ENCODE measurements at regions of chr9 and their contacts with region 1.

Region 1: GRCh38 chr9:114830546-114830945 is 24.7 kb upstream of the TNFSF15 start:
- DNase-seq: no peak
- ATAC-seq: no peak
- H3K4me3 ChIP-seq: no peak overlapping the region
- H3K27ac ChIP-seq: no peak overlapping the region
- H3K4me1 ChIP-seq: no peaks in the 10 kb centered on the region
- H3K27me3 ChIP-seq: no peaks in the 10 kb centered on the region
- CTCF ChIP-seq: no peak

Region 2: GRCh38 chr9:114559830-114560513 is 270.6 kb before region 1 on chr9:
- intact Hi-C with region 1: no loop called
- DNase-seq: no peak
- ATAC-seq: no peak
- H3K4me3 ChIP-seq: no peak overlapping the region
- H3K27ac ChIP-seq: no peak overlapping the region
- H3K4me1 ChIP-seq: no peaks in the 10 kb centered on the region
- H3K27me3 ChIP-seq: no peaks in the 10 kb centered on the region
- CTCF ChIP-seq: no peak

Region 3: GRCh38 chr9:114784721-114785279 is 45.7 kb before region 1 on chr9:
- intact Hi-C with region 1: loop called in 1 of 2 experiments (anchors 5 kb)
- DNase-seq: no peak
- ATAC-seq: no peak
- H3K4me3 ChIP-seq: no peak overlapping the region
- H3K27ac ChIP-seq: no peak overlapping the region
- H3K4me1 ChIP-seq: no peaks in the 10 kb centered on the region
- H3K27me3 ChIP-seq: peaks cover 0 to 2% (median 0%) of the 10 kb centered on the region in 3 donors
- CTCF ChIP-seq: no peak